Left ventricle myocardium superior (tissue), 1 donor: ENCODE measurements at regions of chr5 and their contacts with region 1.

Region 1: GRCh38 chr5:149561848-149562247 is 10.6 kb upstream of the CSNK1A1 start:
- DNase-seq: no peak
- ATAC-seq: peak; percentile 91

Region 2: DNA sequence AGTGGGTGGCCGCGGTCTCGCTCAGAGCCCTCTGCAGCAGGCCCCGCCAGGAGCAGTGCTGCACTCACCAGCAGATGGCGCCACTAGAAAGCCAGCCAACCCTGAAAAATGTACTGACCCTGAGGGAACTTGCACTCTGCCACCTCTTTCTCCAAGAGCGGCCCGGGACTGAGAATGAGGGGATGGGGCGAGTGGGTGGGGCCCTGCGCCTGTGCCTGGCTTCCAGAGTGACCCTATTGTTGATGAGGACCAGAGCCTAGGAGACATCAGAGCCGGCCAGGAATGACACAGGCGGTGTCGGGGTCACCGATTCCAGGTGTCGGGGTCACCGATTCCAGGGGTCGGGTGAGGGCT is 179.9 kb before region 1 on chr5:
- intact Hi-C with region 1: loop called (anchors 10 kb)
- DNase-seq: peak; percentile 88
- ATAC-seq: peak; percentile 78

Region 3: GRCh38 chr5:149434162-149435014 is 127.5 kb before region 1 on chr5:
- intact Hi-C with region 1: loop called (anchors 5 kb)
- DNase-seq: no peak
- ATAC-seq: peak; percentile 22